PC-9 (cell line): ENCODE measurements at regions of chr6 and their contacts with region 1.

Region 1: DNA sequence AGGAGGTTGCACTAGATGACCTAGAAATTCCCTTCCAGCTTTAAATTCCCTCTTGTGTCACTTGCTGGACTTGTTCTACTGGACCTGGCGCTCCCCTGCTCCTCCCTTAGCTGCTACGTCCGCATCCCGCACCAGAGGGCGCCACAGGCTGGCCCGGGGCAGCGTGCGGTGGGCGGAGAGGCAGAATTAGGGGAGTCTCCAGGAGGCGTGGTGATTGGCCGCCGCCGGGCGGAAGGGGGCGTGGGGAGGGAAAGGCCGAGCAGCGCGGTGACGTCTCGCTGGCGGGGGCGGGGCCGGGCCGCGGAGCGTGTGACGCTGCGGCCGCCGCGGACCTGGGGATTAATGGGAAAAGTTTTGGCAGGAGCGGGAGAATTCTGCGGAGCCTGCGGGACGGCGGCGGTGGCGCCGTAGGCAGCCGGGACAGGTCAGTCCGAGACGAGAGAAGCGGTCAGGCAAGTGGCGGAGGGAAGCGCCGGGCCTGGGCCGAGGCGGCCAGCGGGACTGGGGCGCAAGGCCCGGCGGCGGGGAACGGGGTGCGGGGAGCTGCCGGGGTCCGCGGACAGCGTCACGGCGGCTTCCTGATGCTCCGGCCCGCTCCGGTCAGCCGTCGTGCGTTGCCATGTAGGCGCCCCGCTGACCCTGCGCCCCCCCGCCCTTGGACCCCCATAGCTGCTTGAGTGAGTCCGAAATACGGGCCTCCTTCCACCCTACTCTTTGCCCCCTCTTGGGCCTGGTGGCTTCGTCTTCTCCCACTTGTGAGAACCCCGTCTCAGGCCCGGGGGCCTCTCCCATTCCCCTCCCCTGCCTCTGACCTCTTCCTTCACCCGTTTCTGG is at the start of gene PPARD:
- DNase-seq: peak; percentile 91 to 99
- H3K4me3 ChIP-seq: peak within 1 kb of the TSS; percentile 77
- H3K27ac ChIP-seq: peak within 1 kb of the TSS; percentile 95
- H3K4me1 ChIP-seq: peaks cover 25% of the 10 kb centered on the region
- H3K27me3 ChIP-seq: no peaks in the 10 kb centered on the region
- CTCF ChIP-seq: peak; percentile 96
- total RNA-seq, gene PPARD: 18.8 and 24.7 TPM in 2 replicates

Region 2: DNA sequence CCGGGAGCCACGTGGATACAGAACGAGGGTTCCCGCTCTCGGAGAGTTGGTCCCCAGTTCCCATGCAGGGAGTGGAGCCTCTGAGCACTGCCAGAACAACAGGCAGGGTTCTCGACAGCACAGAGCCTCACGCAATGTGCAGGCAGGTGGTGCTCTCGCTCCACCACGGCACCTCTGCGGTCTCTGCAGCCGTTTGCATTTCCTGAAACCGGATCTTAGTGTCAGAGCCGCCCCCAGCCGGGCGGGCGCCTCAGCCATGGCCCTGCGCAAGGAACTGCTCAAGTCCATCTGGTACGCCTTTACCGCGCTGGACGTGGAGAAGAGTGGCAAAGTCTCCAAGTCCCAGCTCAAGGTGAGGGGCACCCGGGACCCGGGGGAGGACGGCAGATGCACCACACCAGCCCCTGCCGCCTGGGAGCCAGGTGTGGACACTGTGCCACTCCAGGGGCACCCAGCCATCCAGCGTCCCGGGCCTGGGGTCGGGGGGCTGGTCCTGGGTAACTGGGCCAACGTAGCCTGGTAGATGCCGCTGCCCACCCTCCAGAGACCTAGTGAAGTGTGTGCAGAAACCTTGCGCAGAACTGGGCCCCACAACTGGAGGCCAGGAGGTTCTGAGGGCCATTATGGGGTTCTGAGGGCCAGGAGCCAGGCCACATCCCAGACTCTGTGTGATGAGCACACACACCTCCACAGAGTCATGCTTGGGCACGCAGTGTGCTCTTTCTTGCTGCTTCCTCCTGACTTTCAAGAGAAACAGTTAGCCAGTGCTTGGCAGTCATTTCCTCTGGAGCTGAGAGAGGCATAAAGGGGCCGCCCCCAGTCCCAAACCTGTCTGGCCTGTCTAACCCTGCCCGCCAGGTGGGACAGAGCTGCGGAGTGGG is 44.6 kb before region 1 on chr6 and contains the start of gene DEF6:
- CTCF ChIA-PET with region 1: interaction called, 5 read pairs
- POLR2A ChIA-PET with region 1: interaction called, 3 read pairs
- intact Hi-C with region 1: loop called (anchors 1 kb)
- DNase-seq: peak; percentile 87
- H3K4me3 ChIP-seq: peak within 1 kb of the TSS; percentile 66
- H3K27ac ChIP-seq: no peak within 1 kb of the TSS
- H3K4me1 ChIP-seq: peaks cover 23% of the 10 kb centered on the region
- H3K27me3 ChIP-seq: no peaks in the 10 kb centered on the region
- CTCF ChIP-seq: peak; percentile 85
- total RNA-seq, gene DEF6: 19.6 and 27.0 TPM in 2 replicates

Region 3: DNA sequence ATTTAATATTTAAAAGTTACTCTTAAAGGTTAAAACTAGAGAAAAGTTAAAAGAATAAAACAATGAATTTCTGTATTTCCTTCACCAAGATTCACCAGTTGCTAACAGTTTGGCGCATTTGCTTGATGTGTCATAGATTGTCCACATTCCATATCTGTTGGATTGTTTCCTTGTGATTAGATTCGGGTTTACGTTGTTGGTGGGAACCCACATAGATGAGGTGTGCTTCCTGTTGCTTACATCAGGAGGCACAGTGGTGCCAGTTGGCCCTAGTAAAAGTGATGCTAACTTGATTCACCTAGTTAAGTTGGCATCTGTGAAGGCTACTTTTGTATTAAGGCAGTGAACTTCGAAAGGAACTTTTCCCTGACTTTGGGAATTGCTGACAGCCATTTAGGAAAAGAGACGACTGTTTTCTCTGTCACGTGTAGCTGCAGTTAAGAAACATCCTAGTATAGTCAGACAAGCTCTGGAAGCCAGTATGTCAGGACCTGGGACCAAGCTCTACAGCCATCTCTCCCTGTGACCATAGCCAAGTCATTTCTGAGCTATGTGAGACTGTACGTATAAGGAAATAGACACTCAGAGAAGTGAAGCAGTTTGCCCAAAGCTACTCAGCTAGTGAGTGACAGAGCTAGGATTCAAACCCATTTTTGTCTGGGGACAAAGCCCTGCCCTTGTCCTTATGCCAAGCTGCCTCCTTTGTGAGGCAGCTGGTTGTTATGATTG is 48.9 kb after region 1 on chr6:
- CTCF ChIA-PET with region 1: no interaction called
- POLR2A ChIA-PET with region 1: interaction called, 5 read pairs
- intact Hi-C with region 1: loop called (anchors 1 kb)
- DNase-seq: peak; percentile 58 to 97
- H3K4me3 ChIP-seq: peak overlapping the region; percentile 47; the same call in 1 of the 2 replicates
- H3K27ac ChIP-seq: peak overlapping the region; percentile 100
- H3K4me1 ChIP-seq: peaks cover 57% of the 10 kb centered on the region
- H3K27me3 ChIP-seq: no peaks in the 10 kb centered on the region
- CTCF ChIP-seq: peak; percentile 29; the same call in 1 of the 2 replicates

Region 4: DNA sequence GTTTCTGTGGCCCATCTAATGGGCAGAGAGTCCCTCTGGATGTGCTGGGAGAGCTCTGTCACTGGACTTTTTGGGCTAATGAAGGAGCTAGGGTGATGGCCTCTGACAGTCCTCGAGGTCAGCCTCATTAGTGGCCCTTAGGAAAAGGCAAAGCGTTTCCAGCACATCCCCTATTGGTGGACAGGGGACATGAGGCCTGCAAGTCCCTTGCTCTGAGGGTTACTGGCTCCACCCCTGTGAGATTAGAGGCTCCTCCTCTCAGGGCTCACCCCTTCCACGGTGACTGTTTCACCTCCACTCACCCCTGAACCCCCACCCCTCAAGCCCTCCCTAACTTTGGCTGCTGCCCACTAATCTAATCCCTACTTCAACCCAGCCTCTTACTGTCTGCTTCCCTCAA is 96.8 kb after region 1 on chr6:
- CTCF ChIA-PET with region 1: interaction called, 13 read pairs
- POLR2A ChIA-PET with region 1: no interaction called
- intact Hi-C with region 1: no loop called
- DNase-seq: no peak
- H3K4me3 ChIP-seq: no peak overlapping the region
- H3K27ac ChIP-seq: no peak overlapping the region
- H3K4me1 ChIP-seq: no peaks in the 10 kb centered on the region
- H3K27me3 ChIP-seq: no peaks in the 10 kb centered on the region
- CTCF ChIP-seq: no peak

Region 5: DNA sequence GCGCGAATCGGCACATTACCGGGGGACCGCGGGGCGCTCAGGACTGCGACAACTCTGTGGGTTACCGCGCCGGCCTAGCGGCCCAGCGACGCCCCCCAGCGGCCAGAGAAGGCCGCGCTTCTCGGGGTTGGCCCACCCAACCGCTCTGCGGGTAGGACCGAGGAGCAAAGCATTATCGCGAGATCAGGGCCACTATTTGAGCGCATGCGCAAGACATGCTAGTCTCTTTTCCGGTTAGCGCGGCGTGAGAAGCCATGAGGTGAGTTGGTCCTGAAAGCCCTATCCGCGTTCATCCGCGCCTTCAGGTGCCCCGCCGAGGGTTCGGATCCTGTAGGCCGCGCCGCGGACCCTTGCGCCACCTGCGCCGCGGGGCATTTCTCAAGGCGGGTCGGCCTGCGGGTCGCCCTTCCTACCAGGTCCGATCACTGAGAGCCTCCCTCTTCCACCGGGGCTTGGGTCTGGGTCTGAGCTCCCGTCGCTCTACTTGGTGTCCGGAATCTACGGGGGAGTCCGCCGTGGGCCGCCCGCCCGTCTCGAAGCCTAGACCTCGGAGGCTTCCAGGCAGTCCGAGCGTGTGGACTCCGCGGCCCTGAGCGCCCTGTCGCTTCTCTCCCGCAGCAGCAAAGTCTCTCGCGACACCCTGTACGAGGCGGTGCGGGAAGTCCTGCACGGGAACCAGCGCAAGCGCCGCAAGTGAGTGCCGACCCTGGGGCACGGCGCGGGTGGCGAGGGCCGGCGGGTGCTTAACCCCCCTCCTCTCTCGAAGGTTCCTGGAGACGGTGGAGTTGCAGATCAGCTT is 125.9 kb after region 1 on chr6 and contains the start of gene RPL10A:
- CTCF ChIA-PET with region 1: interaction called, 4 read pairs
- POLR2A ChIA-PET with region 1: no interaction called
- intact Hi-C with region 1: loop called (anchors 1 kb)
- DNase-seq: peak; percentile 88 to 91
- H3K4me3 ChIP-seq: peak within 1 kb of the TSS; percentile 94
- H3K27ac ChIP-seq: peak within 1 kb of the TSS; percentile 96
- H3K4me1 ChIP-seq: peaks cover 28% of the 10 kb centered on the region
- H3K27me3 ChIP-seq: no peaks in the 10 kb centered on the region
- CTCF ChIP-seq: peak; percentile 93
- total RNA-seq, gene RPL10A: 1,335 and 1,742 TPM in 2 replicates

Region 6: DNA sequence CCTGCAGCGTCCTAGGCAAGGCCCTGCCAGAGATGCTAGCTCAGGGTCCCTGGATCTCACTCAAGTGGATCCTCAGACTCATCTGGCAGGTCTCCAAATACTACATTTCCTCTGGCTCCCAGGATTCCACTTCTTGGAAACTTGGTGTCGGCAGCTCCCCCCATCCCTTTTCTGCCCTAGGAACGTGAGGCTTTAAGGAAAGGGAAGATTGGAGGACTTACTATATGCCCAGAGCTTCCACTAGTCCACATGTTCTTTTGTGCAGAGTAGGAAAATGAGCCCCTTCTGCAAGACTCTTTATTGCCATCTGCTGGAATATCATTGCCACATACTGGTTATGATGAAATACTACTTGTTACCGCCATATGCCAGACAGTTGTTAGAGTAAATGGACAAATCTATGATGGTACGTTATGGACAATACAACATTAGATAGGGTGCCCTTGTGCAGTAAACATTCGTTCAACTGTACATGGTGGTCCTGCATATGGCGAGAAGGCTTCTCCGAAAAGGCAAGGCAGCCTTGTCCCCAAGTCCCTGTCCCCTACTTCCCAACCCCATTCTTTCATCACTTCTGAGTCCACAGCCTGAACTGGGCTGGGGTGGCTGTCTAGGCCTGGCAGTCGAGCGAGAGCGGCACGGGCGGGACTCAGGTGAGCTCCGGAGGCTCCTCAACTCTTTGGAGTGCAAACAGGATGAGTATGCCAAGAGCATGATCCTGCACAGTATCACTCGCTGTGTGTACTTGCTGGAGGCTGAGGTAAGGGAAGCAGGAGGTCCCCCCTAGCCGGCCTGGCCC is 395.1 kb after region 1 on chr6:
- CTCF ChIA-PET with region 1: no interaction called
- POLR2A ChIA-PET with region 1: no interaction called
- intact Hi-C with region 1: loop called (anchors 1 kb)
- DNase-seq: peak in 1 of 2 experiments; percentile 72
- H3K4me3 ChIP-seq: no peak overlapping the region
- H3K27ac ChIP-seq: no peak overlapping the region
- H3K4me1 ChIP-seq: peaks cover 1% of the 10 kb centered on the region
- H3K27me3 ChIP-seq: no peaks in the 10 kb centered on the region
- CTCF ChIP-seq: peak; percentile 75